ENCODE measurements at regions of chr3 and their contacts with region 1.

Region 1: DNA sequence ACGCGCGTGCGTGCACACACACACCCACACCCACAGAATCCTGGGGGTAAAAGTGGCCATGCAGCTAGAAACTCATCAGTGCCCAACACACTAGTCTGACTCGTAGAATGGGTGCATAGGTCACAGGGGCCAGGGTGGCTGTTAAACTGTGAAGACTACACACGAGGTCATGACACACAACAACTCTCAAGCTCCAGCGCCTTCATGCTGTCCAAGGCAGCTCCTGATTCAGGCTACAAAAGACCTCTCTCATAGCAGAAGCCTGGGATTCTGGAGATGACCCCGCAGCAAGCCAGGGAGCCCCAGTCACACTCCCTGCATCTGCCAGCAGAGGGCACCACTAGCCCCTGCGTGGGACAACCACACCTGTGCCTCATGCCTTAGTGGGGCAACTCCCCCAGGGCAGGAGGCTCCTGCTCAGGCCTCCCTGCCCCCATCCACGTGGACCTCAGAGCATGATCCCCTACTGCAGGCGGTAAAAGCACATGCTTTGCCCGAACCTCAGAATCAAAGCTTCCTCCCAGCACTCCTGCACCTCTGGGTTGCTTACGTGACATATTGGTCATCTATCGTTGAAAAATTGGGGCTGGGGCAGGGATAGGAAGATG is 93.1 kb downstream of the LRIG1 start:
- DNase-seq: no peak
- H3K4me3 ChIP-seq: no peak overlapping the region
- CTCF ChIP-seq: peak; percentile 93

Region 2: GRCh38 chr3:66276705-66277274 is 130.9 kb before region 1 on chr3:
- CTCF ChIA-PET with region 1: interaction called, 15 read pairs
- POLR2A ChIA-PET with region 1: no interaction called
- DNase-seq: no peak
- H3K4me3 ChIP-seq: no peak overlapping the region
- CTCF ChIP-seq: peak; percentile 45

Region 3: GRCh38 chr3:66428733-66429132 is 21.0 kb after region 1 on chr3:
- CTCF ChIA-PET with region 1: interaction called, 28 read pairs
- POLR2A ChIA-PET with region 1: interaction called, 4 read pairs
- DNase-seq: peak; percentile 98
- H3K4me3 ChIP-seq: no peak overlapping the region; the same call in 1 of the 2 replicates
- CTCF ChIP-seq: no peak

Region 4: GRCh38 chr3:66472313-66473134 is 64.8 kb after region 1 on chr3:
- CTCF ChIA-PET with region 1: interaction called, 55 read pairs
- POLR2A ChIA-PET with region 1: no interaction called
- DNase-seq: no peak
- H3K4me3 ChIP-seq: no peak overlapping the region; the same call in 1 of the 2 replicates
- CTCF ChIP-seq: no peak

Region 5: GRCh38 chr3:66495646-66496045 is 87.9 kb after region 1 on chr3:
- CTCF ChIA-PET with region 1: interaction called, 35 read pairs
- POLR2A ChIA-PET with region 1: no interaction called
- DNase-seq: no peak
- H3K4me3 ChIP-seq: no peak overlapping the region
- CTCF ChIP-seq: no peak

Region 6: DNA sequence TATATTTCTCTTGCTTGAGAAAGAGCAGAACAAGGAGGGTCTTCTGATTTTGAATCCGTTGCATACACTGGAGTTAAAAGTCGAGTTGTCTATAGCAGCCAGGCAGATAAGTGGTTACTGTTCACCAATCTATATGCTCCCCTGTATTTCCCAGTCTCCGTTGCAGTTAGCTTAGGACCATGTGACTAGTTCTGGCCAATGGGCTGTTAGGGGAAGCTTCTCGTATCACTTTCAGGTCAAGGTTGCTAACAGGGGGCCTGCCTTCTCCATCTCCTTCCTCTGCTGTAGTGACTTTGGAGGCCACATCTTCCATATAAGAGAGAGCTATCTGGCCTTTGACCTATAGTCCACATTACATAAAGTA is 401.9 kb after region 1 on chr3:
- CTCF ChIA-PET with region 1: interaction called, 248 read pairs
- POLR2A ChIA-PET with region 1: no interaction called
- DNase-seq: no peak
- H3K4me3 ChIP-seq: no peak overlapping the region
- CTCF ChIP-seq: no peak

Measured in AG04449 (cell line).